Breast epithelium (tissue), 4 donors: ENCODE measurements at regions of chrX and their contacts with region 1.

Region 1: DNA sequence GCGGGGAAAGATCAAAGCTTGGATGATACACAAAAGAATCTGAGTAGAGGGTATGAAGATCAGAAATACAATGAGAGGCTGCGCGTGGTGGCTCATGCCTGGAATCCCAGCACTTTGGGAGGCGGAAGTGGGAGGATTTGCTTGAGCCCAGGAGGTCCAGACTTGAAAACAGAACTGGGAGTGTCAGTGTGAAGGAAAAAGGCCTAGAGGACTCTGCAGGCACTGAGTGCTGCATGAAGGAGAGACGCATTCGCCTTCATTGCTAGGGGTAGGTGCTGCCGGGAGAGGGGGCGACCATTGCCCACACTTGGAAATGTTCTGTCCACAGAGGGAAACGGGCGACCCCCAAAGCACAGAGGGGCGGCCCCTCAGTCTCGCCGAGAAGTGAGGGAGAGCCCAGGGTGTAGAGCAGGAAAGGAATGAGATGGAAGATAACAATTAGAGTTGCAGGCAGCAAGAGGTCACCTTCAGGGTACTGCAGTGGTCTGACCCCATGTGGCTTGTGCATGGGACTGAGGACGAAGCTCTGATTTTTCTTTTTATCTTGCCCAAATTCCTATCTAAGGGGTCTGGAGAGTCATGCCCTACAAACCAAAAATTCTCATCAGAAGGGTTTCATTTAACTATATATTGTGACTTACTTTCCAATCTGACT is 31.8 kb upstream of the ARSD start:
- DNase-seq: no peak
- H3K4me3 ChIP-seq: no peak overlapping the region
- H3K27ac ChIP-seq: no peak overlapping the region
- H3K4me1 ChIP-seq: no peaks in the 10 kb centered on the region
- H3K27me3 ChIP-seq: peaks cover 0 to 11% of the 10 kb centered on the region in 2 donors
- CTCF ChIP-seq: no peak
- POLR2A ChIP-seq: no peak

Region 2: GRCh38 chrX:2928191-2928763 is 32.7 kb before region 1 on chrX:
- intact Hi-C with region 1: loop called (anchors 2 kb)
- DNase-seq: peak; percentile 39 to 52
- H3K4me3 ChIP-seq: peak overlapping the region; percentile 59 to 77 (median 77)
- H3K27ac ChIP-seq: peak overlapping the region; percentile 97 to 98
- H3K4me1 ChIP-seq: no peaks in the 10 kb centered on the region
- H3K27me3 ChIP-seq: no peaks in the 10 kb centered on the region
- CTCF ChIP-seq: no peak
- POLR2A ChIP-seq: no peak

Region 3: GRCh38 chrX:2989565-2989964 is 28.6 kb after region 1 on chrX:
- intact Hi-C with region 1: no loop called
- DNase-seq: no peak
- H3K4me3 ChIP-seq: no peak overlapping the region
- H3K27ac ChIP-seq: no peak overlapping the region
- H3K4me1 ChIP-seq: no peaks in the 10 kb centered on the region
- H3K27me3 ChIP-seq: no peaks in the 10 kb centered on the region
- CTCF ChIP-seq: no peak
- POLR2A ChIP-seq: no peak

Region 4: GRCh38 chrX:3697701-3698279 is 736.8 kb after region 1 on chrX:
- intact Hi-C with region 1: no loop called
- DNase-seq: peak; percentile 53 to 81
- H3K4me3 ChIP-seq: peak overlapping the region in 2 of 3 donors; percentile 23 to 24
- H3K27ac ChIP-seq: peak overlapping the region; percentile 62 to 78
- H3K4me1 ChIP-seq: no peaks in the 10 kb centered on the region
- H3K27me3 ChIP-seq: no peaks in the 10 kb centered on the region
- CTCF ChIP-seq: no peak
- POLR2A ChIP-seq: no peak